HEK293 (cell line): ENCODE measurements at regions of chr16 and their contacts with region 1.

Region 1: DNA sequence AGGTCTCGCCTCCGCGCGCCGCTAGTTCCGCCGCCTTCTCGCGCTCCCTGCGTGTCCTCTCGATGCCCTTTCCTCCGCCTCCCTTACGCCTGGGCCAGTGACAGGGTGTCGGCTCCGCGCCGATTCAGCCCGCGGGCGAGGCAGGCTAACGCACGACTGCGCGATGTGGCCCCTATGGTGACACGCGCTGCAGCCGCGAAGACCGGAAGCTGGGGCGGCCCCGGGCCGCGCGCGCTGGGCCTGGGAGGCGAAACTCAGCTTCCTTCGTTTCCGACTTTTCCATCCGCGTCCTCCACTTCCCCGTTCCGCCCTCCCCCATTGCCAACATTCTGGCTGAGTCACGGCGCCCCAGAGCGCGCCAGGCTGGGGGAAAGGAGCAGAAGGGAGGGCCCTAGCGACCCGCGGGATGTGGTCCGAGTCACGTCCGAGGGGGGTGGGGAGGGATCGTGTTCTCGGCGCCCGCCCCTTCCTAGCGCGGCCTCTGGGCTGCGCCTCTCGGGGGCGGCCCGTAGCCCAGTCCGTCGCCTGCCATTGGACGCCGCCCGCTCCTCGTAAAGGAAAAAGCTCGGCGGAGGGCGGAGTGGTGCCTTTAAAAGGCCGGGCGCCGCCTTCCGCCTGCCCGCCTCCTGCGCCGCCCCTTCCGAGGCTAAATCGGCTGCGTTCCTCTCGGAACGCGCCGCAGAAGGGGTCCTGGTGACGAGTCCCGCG is at the start of gene ALDOA:
- H3K4me3 ChIP-seq: peak within 1 kb of the TSS; percentile 94
- H3K27ac ChIP-seq: peak within 1 kb of the TSS; percentile 100
- H3K4me1 ChIP-seq: peaks cover 2% of the 10 kb centered on the region; the same call in 1 of the 2 replicates
- CTCF ChIP-seq: peak; percentile 34; the same call in 1 of the 2 replicates

Region 2: GRCh38 chr16:29848420-29849297 is 216.6 kb before region 1 on chr16:
- CTCF ChIA-PET with region 1: no interaction called
- POLR2A ChIA-PET with region 1: no interaction called
- H3K4me3 ChIP-seq: no peak overlapping the region
- H3K27ac ChIP-seq: no peak overlapping the region
- H3K4me1 ChIP-seq: no peaks in the 10 kb centered on the region
- CTCF ChIP-seq: peak; percentile 89

Region 3: DNA sequence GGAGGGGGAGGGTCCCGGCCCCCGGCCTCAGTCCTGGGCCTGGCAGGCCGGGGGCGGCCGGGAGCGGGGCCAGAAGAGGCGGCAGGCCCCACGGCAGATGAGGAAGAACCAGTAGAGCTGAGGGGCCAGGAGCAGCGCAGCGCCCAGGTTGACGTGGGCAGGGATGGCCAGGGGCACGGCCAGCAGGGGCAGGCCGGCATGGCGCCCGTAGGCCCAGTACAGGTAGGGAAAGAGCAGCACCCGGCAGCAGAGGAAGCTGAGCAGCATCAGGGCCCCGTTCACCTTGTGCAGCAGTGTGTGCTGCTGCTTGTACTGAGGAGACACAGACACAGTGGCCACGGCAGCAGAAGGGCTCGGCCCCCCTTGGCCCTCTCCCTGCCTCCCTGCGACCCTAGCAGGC is 40.1 kb before region 1 on chr16:
- CTCF ChIA-PET with region 1: no interaction called
- POLR2A ChIA-PET with region 1: no interaction called
- H3K4me3 ChIP-seq: no peak overlapping the region
- H3K27ac ChIP-seq: no peak overlapping the region
- H3K4me1 ChIP-seq: no peaks in the 10 kb centered on the region
- CTCF ChIP-seq: no peak

Region 4: DNA sequence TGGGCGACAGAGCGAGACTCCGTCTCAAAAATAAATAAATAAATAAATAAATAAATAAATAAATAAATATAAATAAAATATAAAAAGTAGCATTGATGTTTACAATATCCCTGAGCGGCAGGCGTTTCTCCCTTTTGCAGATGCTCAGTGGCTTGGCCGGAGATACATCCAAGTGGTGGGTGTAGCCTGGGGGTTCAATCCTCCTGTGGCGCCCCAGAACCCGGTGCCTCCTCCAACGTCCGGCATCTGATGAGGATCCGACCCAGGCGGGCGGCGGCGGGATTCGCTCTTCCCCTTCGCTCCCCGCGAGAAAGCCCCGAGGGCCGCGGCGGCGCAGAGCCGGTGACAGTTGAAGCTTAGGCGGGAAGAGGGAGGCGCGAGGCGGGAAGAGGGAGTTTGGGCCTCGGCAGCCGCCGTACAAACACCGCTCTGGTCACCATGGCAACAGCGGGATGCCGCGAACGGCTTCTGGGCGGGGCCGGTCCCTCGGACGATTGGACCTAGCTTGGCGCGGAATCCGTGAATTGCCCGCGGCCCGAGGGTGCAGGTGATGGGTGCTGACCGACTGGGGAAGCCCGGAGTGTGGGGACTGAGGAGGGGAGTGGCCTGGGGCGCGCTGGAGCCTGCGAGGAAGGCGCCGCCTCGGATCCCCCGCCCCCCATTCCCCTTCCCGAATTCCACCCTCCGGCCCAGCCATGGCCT is 12.5 kb before region 1 on chr16:
- CTCF ChIA-PET with region 1: interaction called, 25 read pairs
- POLR2A ChIA-PET with region 1: interaction called, 66 read pairs
- H3K4me3 ChIP-seq: peak overlapping the region; percentile 63
- H3K27ac ChIP-seq: peak overlapping the region; percentile 65
- H3K4me1 ChIP-seq: peaks cover 3% of the 10 kb centered on the region; the same call in 1 of the 2 replicates
- CTCF ChIP-seq: peak; percentile 38; the same call in 1 of the 2 replicates

Region 5: GRCh38 chr16:30075507-30076275 is 10.4 kb after region 1 on chr16 and contains the start of gene PPP4C:
- CTCF ChIA-PET with region 1: interaction called, 3 read pairs
- POLR2A ChIA-PET with region 1: interaction called, 70 read pairs
- H3K4me3 ChIP-seq: peak within 1 kb of the TSS; percentile 78
- H3K27ac ChIP-seq: peak within 1 kb of the TSS; percentile 70
- H3K4me1 ChIP-seq: peaks cover 4% of the 10 kb centered on the region; the same call in 1 of the 2 replicates
- CTCF ChIP-seq: peak; percentile 48; the same call in 1 of the 2 replicates

Region 6: GRCh38 chr16:30084816-30085159 is 19.5 kb after region 1 on chr16:
- CTCF ChIA-PET with region 1: interaction called, 4 read pairs
- POLR2A ChIA-PET with region 1: interaction called, 70 read pairs
- H3K4me3 ChIP-seq: no peak overlapping the region
- H3K27ac ChIP-seq: no peak overlapping the region
- H3K4me1 ChIP-seq: no peaks in the 10 kb centered on the region
- CTCF ChIP-seq: no peak